Natural killer cell (primary cell): ENCODE measurements at regions of chr12 and their contacts with region 1.

Region 1: GRCh38 chr12:51994959-51995358 is 11.8 kb upstream of the TAMALIN start:
- DNase-seq: no peak
- ATAC-seq: no peak
- H3K4me3 ChIP-seq: no peak overlapping the region
- H3K4me3 Mint-ChIP-seq: no peak overlapping the region
- H3K27ac ChIP-seq: no peak overlapping the region
- H3K27ac Mint-ChIP-seq: no peak overlapping the region
- H3K4me1 ChIP-seq: peaks cover 3% of the 10 kb centered on the region
- H3K4me1 Mint-ChIP-seq: peaks cover 5% of the 10 kb centered on the region in 2 donors
- H3K27me3 ChIP-seq: no peaks in the 10 kb centered on the region
- H3K27me3 Mint-ChIP-seq: no peaks in the 10 kb centered on the region
- CTCF ChIP-seq: no peak

Region 2: DNA sequence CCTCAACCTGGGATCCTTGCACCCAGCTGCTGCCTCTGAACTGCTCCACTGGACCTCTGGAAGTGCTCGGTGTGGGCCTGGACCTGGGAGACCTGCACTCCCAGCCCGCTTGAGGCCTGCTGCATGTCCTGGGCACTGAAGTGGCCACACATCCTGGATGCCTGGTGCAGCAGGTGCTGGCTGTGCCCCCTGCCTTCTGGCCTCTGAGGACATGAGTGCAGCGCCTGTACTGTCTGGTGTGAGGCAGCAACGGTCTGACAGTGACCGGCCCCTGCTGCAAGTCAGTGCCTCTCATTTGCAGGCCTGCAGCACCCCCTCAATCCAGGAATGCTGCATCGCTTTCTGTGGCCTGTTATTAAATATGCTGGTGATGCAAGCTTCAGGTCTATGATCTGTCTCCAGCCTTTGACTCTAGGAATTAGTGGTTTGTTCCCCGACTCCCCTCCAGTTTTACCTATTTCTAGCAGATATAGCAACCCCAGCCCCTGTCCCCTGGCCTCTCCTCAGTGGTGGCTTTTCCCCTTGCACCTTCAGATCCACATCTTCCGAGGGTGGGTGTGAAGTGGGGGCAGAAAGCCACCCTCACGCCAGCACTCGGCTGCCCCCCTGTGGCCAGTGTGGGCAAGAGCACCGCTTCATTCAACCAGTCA is 88.2 kb after region 1 on chr12:
- intact Hi-C with region 1: loop called (anchors 1 kb)
- DNase-seq: peak; percentile 66 to 84
- ATAC-seq: peak; percentile 76 to 97 (median 90)
- H3K4me3 ChIP-seq: no peak overlapping the region
- H3K4me3 Mint-ChIP-seq: no peak overlapping the region
- H3K27ac ChIP-seq: no peak overlapping the region
- H3K27ac Mint-ChIP-seq: no peak overlapping the region
- H3K4me1 ChIP-seq: peaks cover 22% of the 10 kb centered on the region
- H3K4me1 Mint-ChIP-seq: peaks cover 0 to 13% of the 10 kb centered on the region in 2 donors
- H3K27me3 ChIP-seq: no peaks in the 10 kb centered on the region
- H3K27me3 Mint-ChIP-seq: peaks cover 16 to 25% of the 10 kb centered on the region in 2 donors
- CTCF ChIP-seq: peak; percentile 95